ENCODE measurements at regions of chr4 and their contacts with region 1.

Region 1: GRCh38 chr4:80365928-80366327 is 30.4 kb downstream of the CFAP299 start:
- DNase-seq: peak; percentile 57 to 60
- H3K4me3 ChIP-seq: no peak overlapping the region
- H3K27ac ChIP-seq: no peak overlapping the region
- H3K4me1 ChIP-seq: no peaks in the 10 kb centered on the region
- H3K27me3 ChIP-seq: no peaks in the 10 kb centered on the region
- CTCF ChIP-seq: peak; percentile 72

Region 2: DNA sequence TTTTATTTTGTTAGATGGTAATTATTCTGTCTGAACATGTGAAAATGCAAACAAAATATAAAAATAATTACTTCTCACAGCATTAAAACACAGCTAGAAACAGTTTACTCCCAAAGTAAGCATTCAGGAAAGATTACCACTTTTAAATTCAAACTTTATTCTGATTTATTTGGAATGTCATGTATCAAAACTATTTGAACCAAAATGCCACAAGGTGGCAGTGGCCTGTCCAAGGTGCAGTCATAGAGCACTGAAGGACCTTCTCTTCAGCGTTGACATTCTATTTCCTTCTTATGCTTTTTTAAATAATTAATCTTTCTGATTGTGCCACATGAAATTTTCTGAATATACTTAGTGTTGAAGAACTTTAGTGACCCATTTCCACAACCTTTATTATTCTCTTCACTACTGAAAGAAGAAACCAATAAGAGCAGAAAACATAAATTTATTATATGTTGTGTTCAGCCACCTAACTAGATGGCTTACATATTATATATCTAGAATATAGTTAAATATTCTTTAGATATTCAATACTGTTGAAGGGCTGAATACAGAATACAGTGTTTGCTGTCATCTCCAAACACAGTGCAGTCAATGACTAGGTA is 253.2 kb after region 1 on chr4:
- CTCF ChIA-PET with region 1: no interaction called
- POLR2A ChIA-PET with region 1: no interaction called
- intact Hi-C with region 1: loop called (anchors 1 kb)
- DNase-seq: no peak
- H3K4me3 ChIP-seq: no peak overlapping the region
- H3K27ac ChIP-seq: no peak overlapping the region
- H3K4me1 ChIP-seq: no peaks in the 10 kb centered on the region
- H3K27me3 ChIP-seq: no peaks in the 10 kb centered on the region
- CTCF ChIP-seq: peak; percentile 66

Region 3: DNA sequence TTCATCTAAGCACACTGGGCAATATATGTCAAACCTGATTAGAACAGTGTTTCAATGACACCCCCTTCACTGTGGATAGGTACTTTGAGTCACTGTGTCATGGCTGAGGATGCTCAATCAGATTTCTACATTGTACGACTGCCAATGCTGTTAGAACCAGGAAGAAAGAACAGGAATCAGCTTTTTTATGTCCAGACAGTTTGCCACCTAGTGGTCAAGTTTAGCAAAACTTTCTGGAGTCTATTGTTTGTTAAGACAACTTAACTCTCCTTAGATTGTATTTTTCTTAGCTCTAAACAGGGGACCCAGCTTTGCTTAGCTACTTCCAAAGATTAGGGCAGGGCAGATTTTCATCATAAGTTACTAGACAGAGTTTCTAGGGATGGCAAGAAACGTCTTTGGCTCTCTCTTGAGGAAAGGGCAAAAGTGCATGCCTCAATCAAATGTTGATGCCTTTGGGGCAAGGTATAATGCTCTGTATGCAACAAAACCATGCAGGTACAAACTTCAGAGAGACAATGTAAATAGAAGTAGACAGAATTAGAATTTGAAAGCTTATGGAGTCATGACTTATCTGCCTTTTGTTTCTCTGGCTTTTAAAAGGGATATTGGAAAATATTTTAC is 624.1 kb after region 1 on chr4:
- CTCF ChIA-PET with region 1: no interaction called
- POLR2A ChIA-PET with region 1: no interaction called
- intact Hi-C with region 1: loop called (anchors 1 kb)
- DNase-seq: peak in 1 of 2 experiments; percentile 7
- H3K4me3 ChIP-seq: no peak overlapping the region
- H3K27ac ChIP-seq: no peak overlapping the region
- H3K4me1 ChIP-seq: no peaks in the 10 kb centered on the region
- H3K27me3 ChIP-seq: no peaks in the 10 kb centered on the region
- CTCF ChIP-seq: peak; percentile 76

Region 4: GRCh38 chr4:81052119-81053068 is 686.5 kb after region 1 on chr4:
- CTCF ChIA-PET with region 1: interaction called, 3 read pairs
- POLR2A ChIA-PET with region 1: no interaction called
- intact Hi-C with region 1: loop called (anchors 1 kb)
- DNase-seq: peak; percentile 44 to 46
- H3K4me3 ChIP-seq: no peak overlapping the region
- H3K27ac ChIP-seq: no peak overlapping the region
- H3K4me1 ChIP-seq: no peaks in the 10 kb centered on the region
- H3K27me3 ChIP-seq: no peaks in the 10 kb centered on the region
- CTCF ChIP-seq: peak; percentile 76

Region 5: GRCh38 chr4:81412946-81413495 is 1047.1 kb after region 1 on chr4:
- CTCF ChIA-PET with region 1: no interaction called
- POLR2A ChIA-PET with region 1: no interaction called
- intact Hi-C with region 1: no loop called
- DNase-seq: no peak
- H3K4me3 ChIP-seq: no peak overlapping the region
- H3K27ac ChIP-seq: no peak overlapping the region
- H3K4me1 ChIP-seq: no peaks in the 10 kb centered on the region
- H3K27me3 ChIP-seq: no peaks in the 10 kb centered on the region
- CTCF ChIP-seq: no peak